Kidney (tissue), 22 donors: ENCODE measurements at regions of chr5 and their contacts with region 1.

Region 1: GRCh38 chr5:902129-902916 is 9.6 kb downstream of the TRIP13 start:
- DNase-seq: peak in 2 of 5 donors; percentile 15 to 35
- H3K4me3 ChIP-seq: no peak overlapping the region
- H3K27ac ChIP-seq: no peak overlapping the region
- H3K4me1 ChIP-seq: no peaks in the 10 kb centered on the region
- H3K27me3 ChIP-seq: no peaks in the 10 kb centered on the region
- CTCF ChIP-seq: no peak

Region 2: GRCh38 chr5:442335-443238 is 459.7 kb before region 1 on chr5 and contains the start of gene EXOC3:
- intact Hi-C with region 1: loop called (anchors 10 kb)
- DNase-seq: peak in 4 of 5 donors; percentile 76 to 92 (median 83)
- H3K4me3 ChIP-seq: peak within 1 kb of the TSS; percentile 82 to 98 (median 98)
- H3K27ac ChIP-seq: peak within 1 kb of the TSS; percentile 32 to 37
- H3K4me1 ChIP-seq: peaks cover 0 to 16% (median 6%) of the 10 kb centered on the region in 3 donors
- H3K27me3 ChIP-seq: no peaks in the 10 kb centered on the region
- CTCF ChIP-seq: no peak
- total RNA-seq, gene EXOC3: 71.5 TPM

Region 3: DNA sequence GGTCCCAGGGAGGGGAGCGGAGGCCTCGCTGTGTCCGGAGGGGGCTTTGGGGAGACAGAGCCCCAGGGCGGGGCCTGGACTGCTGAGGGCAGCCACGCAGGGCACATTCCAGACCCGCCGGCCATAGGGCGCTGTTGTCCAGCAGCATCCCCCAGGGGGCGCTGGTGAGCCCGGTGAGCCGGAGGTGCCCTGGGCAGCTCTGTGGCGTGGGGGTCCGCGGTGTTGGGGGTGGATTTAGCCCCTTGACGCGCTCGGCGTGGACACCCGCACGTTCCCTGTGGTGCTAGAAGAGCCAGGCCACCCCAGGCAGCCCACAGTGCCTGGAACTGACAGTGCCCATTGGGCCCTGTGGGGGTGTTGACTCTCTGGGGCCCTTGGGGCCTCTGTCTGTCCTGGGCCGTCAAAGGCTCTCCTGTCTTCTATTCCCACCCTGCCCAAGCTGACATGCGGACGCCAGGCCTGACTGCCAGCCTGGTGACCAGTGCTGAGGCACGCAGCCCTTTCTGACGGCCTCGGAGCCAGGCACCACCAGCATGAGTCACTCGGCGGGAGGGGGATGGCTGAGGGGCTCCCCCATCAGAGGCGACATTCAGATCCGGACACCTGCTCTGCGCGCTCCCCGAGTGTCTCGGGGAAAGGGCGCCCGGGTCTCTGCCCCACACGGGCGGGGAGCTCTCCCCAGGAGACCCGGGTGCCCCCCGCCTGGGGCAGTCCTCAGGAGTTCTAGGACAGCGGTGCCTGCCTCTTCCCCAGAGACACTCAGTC is 233.0 kb before region 1 on chr5:
- intact Hi-C with region 1: loop called (anchors 10 kb)
- DNase-seq: peak in 3 of 5 donors; percentile 40 to 74 (median 61)
- H3K4me3 ChIP-seq: no peak overlapping the region
- H3K27ac ChIP-seq: no peak overlapping the region
- H3K4me1 ChIP-seq: peaks cover 0 to 16% (median 4%) of the 10 kb centered on the region in 3 donors
- H3K27me3 ChIP-seq: no peaks in the 10 kb centered on the region
- CTCF ChIP-seq: peak; percentile 25